Activated CD4-positive, alpha-beta memory T cell treated with anti-CD3 and anti-CD28 coated beads for 36 hours (primary cell): ENCODE measurements at regions of chr3 and their contacts with region 1.

Region 1: DNA sequence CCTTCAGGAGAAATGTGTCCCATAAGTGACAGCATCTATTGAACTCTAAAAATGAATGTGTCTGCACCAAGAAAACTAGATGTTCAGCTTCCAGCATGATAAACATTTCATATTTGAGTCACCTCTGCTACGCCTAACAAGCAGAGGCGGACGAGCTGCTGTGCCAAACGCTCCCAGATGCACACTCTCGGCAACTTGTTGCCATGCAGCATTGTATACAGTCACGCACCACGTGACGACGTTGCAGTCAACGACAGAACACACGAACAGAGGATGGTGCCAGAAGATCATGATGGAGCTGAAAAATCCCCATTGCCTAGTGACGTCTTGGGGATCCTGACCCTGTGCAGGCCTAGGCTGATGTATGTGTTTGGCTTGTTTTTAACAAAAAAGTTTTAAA is 137.5 kb downstream of the XXYLT1 start:
- DNase-seq: peak; percentile 90
- H3K4me3 Mint-ChIP-seq: no peak overlapping the region
- H3K27ac Mint-ChIP-seq: peak overlapping the region; percentile 61
- H3K4me1 Mint-ChIP-seq: peaks cover 44% of the 10 kb centered on the region
- H3K27me3 Mint-ChIP-seq: no peaks in the 10 kb centered on the region

Region 2: GRCh38 chr3:195173657-195174056 is 40.2 kb after region 1 on chr3:
- CTCF ChIA-PET with region 1: no interaction called
- POLR2A ChIA-PET with region 1: no interaction called
- intact Hi-C with region 1: no loop called
- DNase-seq: no peak
- H3K4me3 Mint-ChIP-seq: no peak overlapping the region
- H3K27ac Mint-ChIP-seq: no peak overlapping the region
- H3K4me1 Mint-ChIP-seq: no peaks in the 10 kb centered on the region
- H3K27me3 Mint-ChIP-seq: peaks cover 1% of the 10 kb centered on the region

Region 3: GRCh38 chr3:195194559-195195206 is 61.2 kb after region 1 on chr3:
- CTCF ChIA-PET with region 1: interaction called, 5 read pairs
- POLR2A ChIA-PET with region 1: no interaction called
- intact Hi-C with region 1: loop called (anchors 1 kb)
- DNase-seq: peak; percentile 29
- H3K4me3 Mint-ChIP-seq: peak overlapping the region; percentile 27
- H3K27ac Mint-ChIP-seq: no peak overlapping the region
- H3K4me1 Mint-ChIP-seq: peaks cover 27% of the 10 kb centered on the region
- H3K27me3 Mint-ChIP-seq: no peaks in the 10 kb centered on the region

Region 4: DNA sequence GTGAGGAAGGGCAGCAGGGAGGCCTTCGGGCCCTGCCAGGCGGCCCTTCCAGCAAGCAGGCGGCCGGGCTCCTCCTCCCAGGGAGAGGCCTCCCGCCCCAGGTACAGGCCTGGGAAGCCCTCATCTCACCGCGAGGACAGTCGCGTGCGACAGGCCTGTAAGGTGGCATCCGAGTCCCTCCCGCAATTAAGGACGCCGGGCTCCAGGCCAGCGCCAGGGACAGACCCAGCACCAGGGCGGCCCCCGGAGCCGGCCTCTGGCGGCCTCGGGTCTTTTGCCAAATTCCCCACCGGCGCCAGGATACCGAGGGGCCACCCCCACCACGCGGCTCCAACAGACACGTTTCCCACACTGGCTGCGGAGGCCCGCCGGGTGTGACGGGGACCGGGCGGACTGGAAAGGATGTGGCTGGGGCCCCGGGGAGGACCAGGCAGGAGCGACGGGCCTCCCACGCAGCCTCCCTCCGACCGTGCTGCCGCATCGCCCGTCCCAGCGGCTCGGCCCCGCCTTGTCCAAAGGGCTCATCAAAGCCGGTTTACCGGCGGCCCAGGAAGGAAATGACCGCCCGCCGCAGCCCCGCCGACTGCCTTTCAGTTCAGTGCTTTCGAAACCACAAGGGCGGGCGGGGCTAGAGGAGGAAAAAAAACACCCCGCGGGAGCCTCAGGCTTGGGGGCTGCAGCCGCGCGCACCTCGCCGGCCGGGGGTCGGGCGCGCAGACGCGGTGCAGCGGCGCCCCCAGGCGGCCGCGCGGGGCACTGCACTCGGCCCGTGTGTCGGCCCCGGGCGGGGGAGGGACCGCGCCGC is 126.2 kb after region 1 on chr3:
- CTCF ChIA-PET with region 1: interaction called, 6 read pairs
- POLR2A ChIA-PET with region 1: no interaction called
- intact Hi-C with region 1: loop called (anchors 2 kb)
- DNase-seq: peak; percentile 90
- H3K4me3 Mint-ChIP-seq: peak overlapping the region; percentile 57
- H3K27ac Mint-ChIP-seq: peak overlapping the region; percentile 42
- H3K4me1 Mint-ChIP-seq: peaks cover 14% of the 10 kb centered on the region
- H3K27me3 Mint-ChIP-seq: no peaks in the 10 kb centered on the region